MCF 10A (cell line): ENCODE measurements at regions of chr12 and their contacts with region 1.

Region 1: GRCh38 chr12:85575120-85576096 is 260.8 kb downstream of the RASSF9 start:
- DNase-seq: peak; percentile 79
- H3K4me3 Mint-ChIP-seq: no peak overlapping the region
- H3K27ac Mint-ChIP-seq: no peak overlapping the region
- H3K4me1 Mint-ChIP-seq: no peaks in the 10 kb centered on the region
- H3K27me3 Mint-ChIP-seq: no peaks in the 10 kb centered on the region
- CTCF ChIP-seq: peak; percentile 66

Region 2: GRCh38 chr12:85457016-85457415 is 118.4 kb before region 1 on chr12:
- CTCF ChIA-PET with region 1: no interaction called
- POLR2A ChIA-PET with region 1: no interaction called
- intact Hi-C with region 1: no loop called
- DNase-seq: no peak
- H3K4me3 Mint-ChIP-seq: no peak overlapping the region
- H3K27ac Mint-ChIP-seq: no peak overlapping the region
- H3K4me1 Mint-ChIP-seq: peaks cover 5% of the 10 kb centered on the region
- H3K27me3 Mint-ChIP-seq: no peaks in the 10 kb centered on the region
- CTCF ChIP-seq: no peak

Region 3: GRCh38 chr12:85468356-85469157 is 106.9 kb before region 1 on chr12:
- CTCF ChIA-PET with region 1: interaction called, 10 read pairs
- POLR2A ChIA-PET with region 1: no interaction called
- intact Hi-C with region 1: loop called (anchors 5 kb)
- DNase-seq: peak; percentile 78
- H3K4me3 Mint-ChIP-seq: peak overlapping the region; percentile 69
- H3K27ac Mint-ChIP-seq: peak overlapping the region; percentile 59
- H3K4me1 Mint-ChIP-seq: peaks cover 21% of the 10 kb centered on the region
- H3K27me3 Mint-ChIP-seq: no peaks in the 10 kb centered on the region
- CTCF ChIP-seq: peak; percentile 85